ENCODE measurements at regions of chr17 and their contacts with region 1.

Region 1: DNA sequence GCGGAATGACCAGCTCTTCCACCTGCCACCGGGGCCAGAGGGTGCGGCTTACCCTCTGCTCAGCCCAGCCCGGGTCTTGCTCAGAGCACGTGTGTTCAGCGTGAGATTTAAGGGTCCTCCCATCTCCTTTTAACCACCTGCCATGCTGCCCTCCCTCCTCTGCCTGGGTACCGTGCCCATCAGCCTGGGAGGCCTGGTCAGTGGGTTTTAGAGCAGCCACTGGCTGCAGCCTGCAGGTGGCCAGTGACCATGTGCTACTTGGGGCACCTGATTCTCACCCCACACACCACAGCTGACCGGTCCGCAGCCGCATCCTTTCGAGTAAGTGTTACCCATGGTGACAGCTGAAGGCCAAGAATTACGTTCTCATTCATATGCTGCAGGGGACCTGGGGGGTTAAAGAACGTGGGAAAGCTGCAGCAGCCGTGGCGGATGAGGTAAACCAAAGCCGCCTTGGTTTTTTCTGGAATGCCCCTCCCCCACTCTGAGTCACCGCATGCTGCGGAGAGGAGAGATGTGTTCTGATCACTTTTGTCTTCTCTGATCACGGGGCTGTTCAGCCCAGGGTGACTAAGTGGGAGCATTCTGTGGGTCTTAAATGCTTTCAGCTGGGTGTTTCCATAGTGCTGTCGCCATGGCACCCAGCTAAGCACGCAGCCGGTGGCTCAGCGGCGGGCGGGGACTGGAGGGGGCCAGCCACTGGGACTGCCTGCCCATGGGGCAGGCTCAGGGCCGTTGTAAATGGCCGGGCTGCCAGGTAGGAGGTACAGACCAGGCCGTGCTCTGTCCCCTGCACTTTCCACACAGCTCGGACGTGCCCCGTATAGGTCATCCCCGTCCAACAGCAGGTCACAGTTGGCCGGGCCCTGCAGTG is 59.8 kb downstream of the BAIAP2 start:
- DNase-seq: peak; percentile 61 to 96 (median 90)
- ATAC-seq: peak; percentile 91
- H3K4me3 ChIP-seq: peak overlapping the region; percentile 32
- H3K4me3 Mint-ChIP-seq: peak overlapping the region; percentile 80
- H3K27ac ChIP-seq: peak overlapping the region in 1 of 2 donors; percentile 59
- H3K27ac Mint-ChIP-seq: peak overlapping the region; percentile 87
- H3K4me1 ChIP-seq: peaks cover 81% of the 10 kb centered on the region
- H3K4me1 Mint-ChIP-seq: peaks cover 35% of the 10 kb centered on the region
- H3K27me3 ChIP-seq: no peaks in the 10 kb centered on the region
- H3K27me3 Mint-ChIP-seq: no peaks in the 10 kb centered on the region
- CTCF ChIP-seq: no peak

Region 2: DNA sequence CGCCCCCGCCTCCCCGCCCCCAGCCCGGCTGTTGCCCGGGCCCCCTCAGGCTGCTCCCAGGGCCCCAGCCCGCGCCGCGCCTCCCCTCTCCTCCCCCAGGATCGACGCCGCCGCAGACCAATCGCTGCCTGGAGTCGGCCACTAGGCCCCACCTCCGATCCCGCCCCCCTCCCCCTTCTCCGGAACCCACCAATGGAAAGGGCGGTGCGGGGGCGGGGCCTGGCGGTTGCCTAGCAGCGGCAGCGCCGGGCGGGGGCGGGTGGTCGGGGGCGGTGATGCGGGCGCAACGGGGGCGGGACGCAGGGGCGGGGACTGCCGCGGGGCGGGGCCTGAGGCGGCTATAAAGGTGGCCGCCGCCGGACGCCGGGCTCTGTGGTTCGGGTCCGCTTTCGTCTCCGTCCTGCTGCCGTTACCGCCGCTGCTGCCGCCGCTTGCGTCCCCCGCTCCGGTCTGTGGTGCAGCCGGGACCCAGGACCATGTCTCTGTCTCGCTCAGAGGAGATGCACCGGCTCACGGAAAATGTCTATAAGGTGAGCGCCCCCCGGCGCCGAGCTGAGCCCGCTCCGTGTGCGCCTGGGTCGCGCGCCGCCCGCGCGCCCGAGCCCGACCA is 59.9 kb before region 1 on chr17 and contains the start of gene BAIAP2:
- CTCF ChIA-PET with region 1: interaction called, 3 read pairs
- POLR2A ChIA-PET with region 1: no interaction called
- intact Hi-C with region 1: loop called in 1 of 2 experiments (anchors 2 kb)
- DNase-seq: peak; percentile 96 to 100 (median 98)
- ATAC-seq: peak; percentile 86
- H3K4me3 ChIP-seq: peak within 1 kb of the TSS; percentile 60
- H3K4me3 Mint-ChIP-seq: peak within 1 kb of the TSS; percentile 98
- H3K27ac ChIP-seq: no peak within 1 kb of the TSS
- H3K27ac Mint-ChIP-seq: peak within 1 kb of the TSS; percentile 82
- H3K4me1 ChIP-seq: peaks cover 25% of the 10 kb centered on the region
- H3K4me1 Mint-ChIP-seq: peaks cover 28% of the 10 kb centered on the region
- H3K27me3 ChIP-seq: peaks cover 0 to 2% of the 10 kb centered on the region in 2 experiments
- H3K27me3 Mint-ChIP-seq: peaks cover 1% of the 10 kb centered on the region
- CTCF ChIP-seq: no peak
- total RNA-seq, gene BAIAP2: 4.2 to 4.9 TPM

Region 3: DNA sequence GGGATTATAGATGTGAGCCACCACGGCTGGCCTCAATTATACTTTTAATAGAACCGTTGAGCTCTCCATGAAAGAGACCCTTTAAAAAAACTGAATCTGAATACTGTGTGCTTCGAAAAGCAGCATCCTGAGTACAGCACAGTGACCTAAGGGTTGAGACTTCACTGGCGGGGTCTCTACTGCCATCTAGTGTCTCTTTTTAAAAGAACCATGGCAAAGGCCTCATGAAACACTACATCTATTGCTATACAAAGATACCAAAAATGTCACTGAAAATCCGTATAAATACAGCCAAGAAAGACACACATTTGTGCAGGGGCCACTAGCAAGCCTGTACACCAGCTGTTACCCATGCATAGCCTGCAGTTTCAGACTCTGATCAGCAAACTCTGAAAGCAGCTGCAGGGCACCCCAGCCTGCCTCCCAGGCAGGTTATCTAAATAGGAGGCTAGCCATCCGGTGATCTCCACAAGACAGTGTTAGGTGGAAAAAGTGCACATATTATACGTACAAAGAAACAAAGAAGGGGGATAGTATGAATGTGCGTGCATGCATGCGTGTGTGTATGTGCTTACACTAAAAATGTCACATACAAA is 506.9 kb after region 1 on chr17:
- CTCF ChIA-PET with region 1: no interaction called
- POLR2A ChIA-PET with region 1: no interaction called
- intact Hi-C with region 1: no loop called
- DNase-seq: peak in 12 of 14 experiments; percentile 10 to 80 (median 26)
- ATAC-seq: peak; percentile 98
- H3K4me3 ChIP-seq: no peak overlapping the region
- H3K4me3 Mint-ChIP-seq: no peak overlapping the region
- H3K27ac ChIP-seq: no peak overlapping the region
- H3K27ac Mint-ChIP-seq: no peak overlapping the region
- H3K4me1 ChIP-seq: peaks cover 3% of the 10 kb centered on the region
- H3K4me1 Mint-ChIP-seq: peaks cover 6% of the 10 kb centered on the region
- H3K27me3 ChIP-seq: no peaks in the 10 kb centered on the region
- H3K27me3 Mint-ChIP-seq: no peaks in the 10 kb centered on the region
- CTCF ChIP-seq: peak; percentile 84

Measured in CD4-positive, alpha-beta T cell (primary cell).